Adrenal gland (tissue), 19 donors: ENCODE measurements at regions of chrX and their contacts with region 1.

Region 1: GRCh38 chrX:65706041-65706828 is 38.8 kb downstream of the MSN start:
- DNase-seq: peak in 6 of 7 donors; percentile 34 to 65 (median 42)
- H3K4me3 ChIP-seq: no peak overlapping the region
- H3K27ac ChIP-seq: peak overlapping the region in 4 of 5 donors; percentile 27 to 74 (median 50)
- H3K4me1 ChIP-seq: peaks cover 9 to 27% of the 10 kb centered on the region in 2 donors
- H3K27me3 ChIP-seq: peaks cover 6% of the 10 kb centered on the region
- CTCF ChIP-seq: no peak
- POLR2A ChIP-seq: no peak

Region 2: GRCh38 chrX:65575022-65575421 is 131.2 kb before region 1 on chrX:
- intact Hi-C with region 1: no loop called
- DNase-seq: no peak
- H3K4me3 ChIP-seq: no peak overlapping the region
- H3K27ac ChIP-seq: no peak overlapping the region
- H3K4me1 ChIP-seq: no peaks in the 10 kb centered on the region
- H3K27me3 ChIP-seq: peaks cover 12% of the 10 kb centered on the region
- CTCF ChIP-seq: no peak
- POLR2A ChIP-seq: no peak

Region 3: GRCh38 chrX:65595460-65595876 is 110.8 kb before region 1 on chrX:
- intact Hi-C with region 1: loop called in 1 of 2 experiments (anchors 10 kb)
- DNase-seq: peak; percentile 90 to 98 (median 96)
- H3K4me3 ChIP-seq: no peak overlapping the region
- H3K27ac ChIP-seq: peak overlapping the region in 4 of 5 donors; percentile 33 to 68 (median 52)
- H3K4me1 ChIP-seq: no peaks in the 10 kb centered on the region
- H3K27me3 ChIP-seq: no peaks in the 10 kb centered on the region
- CTCF ChIP-seq: peak; percentile 97 to 99 (median 98)
- POLR2A ChIP-seq: peak in 1 of 2 donors; percentile 35

Region 4: DNA sequence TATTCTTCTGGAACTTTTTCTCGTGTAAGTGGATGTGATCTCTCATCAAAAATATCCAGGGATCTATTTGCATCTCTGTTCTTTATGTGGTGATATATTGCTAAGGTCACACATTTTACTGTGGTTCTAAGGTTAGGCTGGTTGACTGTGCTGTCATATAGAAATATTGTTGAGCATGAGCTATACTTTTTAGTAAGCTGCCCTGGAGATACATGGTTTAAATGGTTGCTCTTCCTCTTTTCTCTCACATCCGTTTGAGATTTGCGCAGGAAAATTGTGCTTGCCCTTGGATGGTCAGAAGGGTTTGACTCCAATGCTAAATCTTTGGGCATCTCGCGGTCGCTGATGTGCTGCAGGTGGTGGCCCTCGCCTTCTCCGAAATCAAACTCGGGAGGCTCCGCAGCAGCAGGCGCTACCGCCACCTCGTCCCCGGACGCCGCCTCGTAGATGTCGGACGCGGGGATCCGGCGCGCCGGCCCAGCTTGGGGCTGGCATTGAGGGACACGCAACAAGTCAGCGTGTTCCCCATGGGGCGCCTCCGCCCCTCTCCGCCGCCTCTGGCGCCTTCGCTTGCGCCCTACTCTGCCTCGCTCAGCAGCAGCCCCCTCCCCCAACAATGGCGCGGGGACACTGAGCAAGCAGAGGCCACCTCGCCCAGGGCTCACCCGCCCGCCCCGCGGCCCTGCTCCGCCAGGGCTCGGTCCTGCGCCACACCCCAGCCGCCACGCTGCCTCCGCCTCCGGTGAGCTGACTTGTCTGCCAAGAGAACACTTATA is 115.7 kb after region 1 on chrX:
- intact Hi-C with region 1: no loop called
- DNase-seq: peak in 1 of 7 donors; percentile 0
- H3K4me3 ChIP-seq: peak overlapping the region in 1 of 4 donors; percentile 25
- H3K27ac ChIP-seq: no peak overlapping the region
- H3K4me1 ChIP-seq: no peaks in the 10 kb centered on the region
- H3K27me3 ChIP-seq: peaks cover 27% of the 10 kb centered on the region
- CTCF ChIP-seq: no peak
- POLR2A ChIP-seq: no peak